Cardiac septum (tissue), 1 donor: ENCODE measurements at regions of chr11 and their contacts with region 1.

Region 1: DNA sequence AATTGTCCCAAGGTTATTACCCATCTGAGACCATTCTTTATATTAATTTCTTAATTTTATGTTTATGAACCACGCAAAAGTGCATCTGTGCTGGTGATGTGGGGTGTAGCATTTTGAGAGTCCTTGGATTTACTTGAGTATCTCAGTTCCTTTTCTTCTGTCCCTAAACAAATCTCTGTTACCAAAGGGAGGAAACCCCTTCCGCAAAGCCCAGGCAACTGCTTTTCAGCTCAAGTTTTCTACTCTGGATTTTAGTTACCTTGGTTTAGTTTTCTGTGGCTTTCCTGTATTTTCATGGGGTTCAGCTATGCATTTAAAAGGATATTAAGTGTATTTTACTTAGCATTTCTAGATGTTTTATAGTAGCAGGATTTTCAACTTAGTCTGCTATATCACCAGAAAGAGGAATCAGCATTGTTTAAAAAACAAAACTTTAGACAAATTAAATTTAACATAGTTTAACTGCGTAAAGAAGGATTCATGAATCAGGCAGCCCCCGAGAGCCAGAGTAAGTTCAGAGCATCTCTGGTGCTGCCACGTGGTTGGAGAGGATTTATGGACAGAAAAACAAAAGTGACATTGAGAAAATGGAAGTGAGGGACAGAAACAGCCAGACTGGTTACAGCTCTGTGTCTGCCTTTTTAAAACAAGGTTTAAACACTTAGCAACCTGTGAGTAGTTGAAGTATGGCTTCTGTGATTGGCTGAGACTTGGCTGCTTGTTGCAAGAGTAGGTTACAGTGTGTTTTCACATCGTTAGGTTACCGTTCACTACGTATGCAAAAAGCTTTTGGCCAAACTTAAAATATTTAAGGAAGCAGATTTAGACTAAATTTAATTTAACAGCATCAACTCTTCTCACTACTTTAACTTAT is 9.6 kb downstream of the ADM start:
- DNase-seq: no peak

Region 2: GRCh38 chr11:10351768-10352641 is 37.6 kb after region 1 on chr11:
- intact Hi-C with region 1: loop called (anchors 5 kb)
- DNase-seq: peak; percentile 78